Ovary (tissue), 10 donors: ENCODE measurements at regions of chr5 and their contacts with region 1.

Region 1: GRCh38 chr5:180670586-180671359 is 21.4 kb upstream of the FLT4 start:
- DNase-seq: peak in 1 of 5 donors; percentile 46
- H3K4me3 ChIP-seq: no peak overlapping the region
- H3K27ac ChIP-seq: no peak overlapping the region
- H3K4me1 ChIP-seq: no peaks in the 10 kb centered on the region
- H3K27me3 ChIP-seq: no peaks in the 10 kb centered on the region
- CTCF ChIP-seq: no peak
- EP300 ChIP-seq: no peak
- POLR2A ChIP-seq: no peak

Region 2: DNA sequence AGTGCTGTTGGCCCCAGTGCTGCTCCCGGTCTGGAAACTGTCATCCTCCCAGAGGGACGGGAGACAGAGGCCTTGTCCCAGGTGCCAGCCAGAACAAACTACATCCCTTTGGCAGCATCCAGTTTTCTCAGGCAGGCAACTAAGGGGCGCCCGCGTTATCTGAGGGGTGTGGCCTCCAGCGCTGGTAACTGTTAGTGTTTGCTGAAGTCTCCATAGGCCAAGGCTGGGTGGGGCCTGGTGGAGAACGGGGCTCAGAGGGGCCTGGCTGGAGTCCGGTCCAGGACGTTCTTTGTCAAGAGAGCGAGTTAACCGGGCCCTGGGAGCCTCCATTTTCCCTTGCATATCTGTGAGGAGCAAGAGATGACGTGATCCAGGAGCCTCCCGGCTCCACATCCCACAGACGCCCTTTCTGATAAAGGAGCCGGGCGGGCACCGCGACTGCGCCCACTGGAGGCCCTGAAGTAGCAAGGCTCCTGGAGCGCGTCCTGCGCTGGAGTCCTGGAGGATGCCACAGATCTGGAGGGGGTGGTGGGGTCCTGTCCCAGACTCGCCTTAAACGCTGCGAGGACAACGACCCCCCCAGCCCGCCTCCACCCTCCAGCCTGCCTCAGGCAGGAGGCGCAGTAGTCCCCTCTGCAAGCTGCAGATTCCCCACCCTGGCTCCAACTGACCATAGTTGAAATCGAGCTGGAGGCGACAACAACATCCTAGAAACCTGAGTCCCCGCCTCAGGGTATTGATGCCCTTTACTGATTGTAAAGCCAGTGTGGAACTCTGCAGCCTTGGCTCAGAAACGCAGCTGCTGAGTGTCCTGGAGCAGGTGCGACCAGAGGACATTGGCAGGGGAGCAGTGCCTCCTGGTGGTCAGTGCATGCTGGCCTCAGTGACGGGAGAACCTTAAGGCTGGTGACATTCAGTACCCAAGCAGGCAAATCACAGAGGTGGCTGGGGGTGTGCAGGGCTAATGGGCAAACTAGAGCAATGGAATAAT is 1831.8 kb before region 1 on chr5:
- intact Hi-C with region 1: loop called in 1 of 4 experiments (anchors 10 kb)
- DNase-seq: no peak
- H3K4me3 ChIP-seq: no peak overlapping the region
- H3K27ac ChIP-seq: no peak overlapping the region
- H3K4me1 ChIP-seq: no peaks in the 10 kb centered on the region
- H3K27me3 ChIP-seq: no peaks in the 10 kb centered on the region
- CTCF ChIP-seq: no peak
- EP300 ChIP-seq: no peak
- POLR2A ChIP-seq: no peak

Region 3: GRCh38 chr5:180718810-180719453 is 48.2 kb after region 1 on chr5:
- intact Hi-C with region 1: no loop called
- DNase-seq: no peak
- H3K4me3 ChIP-seq: no peak overlapping the region
- H3K27ac ChIP-seq: no peak overlapping the region
- H3K4me1 ChIP-seq: no peaks in the 10 kb centered on the region
- H3K27me3 ChIP-seq: no peaks in the 10 kb centered on the region
- CTCF ChIP-seq: peak in 1 of 3 donors; percentile 30
- EP300 ChIP-seq: no peak
- POLR2A ChIP-seq: no peak